ENCODE measurements at regions of chr19 and their contacts with region 1.

Region 1: GRCh38 chr19:18919086-18919899 is at the starts of genes COPE and DDX49:
- DNase-seq: peak; percentile 98
- H3K4me3 Mint-ChIP-seq: peak within 1 kb of the TSS; percentile 96
- H3K27ac Mint-ChIP-seq: peak within 1 kb of the TSS; percentile 94
- H3K4me1 Mint-ChIP-seq: peaks cover 19% of the 10 kb centered on the region
- H3K27me3 Mint-ChIP-seq: no peaks in the 10 kb centered on the region
- total RNA-seq, gene COPE: 231 and 240 TPM in 2 replicates
- total RNA-seq, gene DDX49: 75.2 and 77.5 TPM in 2 replicates

Region 2: DNA sequence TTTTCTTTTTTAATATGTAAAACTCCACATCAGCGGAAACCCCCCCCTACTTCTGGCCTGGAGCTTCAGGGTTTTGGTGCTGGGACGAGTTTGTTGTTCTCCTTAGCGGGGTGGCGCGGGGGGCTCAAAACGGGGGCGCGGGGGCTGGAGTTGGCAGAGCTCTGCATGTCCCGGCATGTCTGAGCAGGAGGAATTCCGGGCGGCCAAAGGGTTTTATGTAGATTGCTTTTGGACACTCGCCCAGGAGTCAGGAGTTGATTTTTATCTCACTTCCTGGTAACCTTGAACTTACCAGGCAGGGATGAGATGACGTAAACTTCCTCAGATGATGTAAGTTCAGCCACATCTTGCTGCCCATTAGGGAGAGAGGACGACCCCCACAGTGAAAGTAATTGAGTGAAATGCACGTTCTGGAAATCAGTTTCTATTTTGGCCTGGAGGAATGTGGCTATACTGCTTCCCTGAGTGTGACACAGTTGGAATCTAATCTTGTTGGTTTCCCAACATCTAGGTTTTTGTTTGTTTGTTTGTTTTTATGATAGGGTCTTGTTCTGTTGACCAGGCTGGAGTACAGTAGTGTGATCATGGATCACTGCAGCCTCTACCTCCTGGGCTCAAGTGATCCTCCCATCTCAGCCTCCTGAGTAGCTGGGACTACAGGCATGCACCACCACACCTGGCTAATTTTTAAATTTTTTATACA is 554.3 kb before region 1 on chr19:
- intact Hi-C with region 1: no loop called
- DNase-seq: no peak
- H3K4me3 Mint-ChIP-seq: no peak overlapping the region
- H3K27ac Mint-ChIP-seq: no peak overlapping the region
- H3K4me1 Mint-ChIP-seq: no peaks in the 10 kb centered on the region
- H3K27me3 Mint-ChIP-seq: no peaks in the 10 kb centered on the region

Region 3: GRCh38 chr19:18932216-18932841 is 13.0 kb after region 1 on chr19:
- intact Hi-C with region 1: loop called (anchors 1 kb)
- DNase-seq: peak; percentile 66
- H3K4me3 Mint-ChIP-seq: peak overlapping the region; percentile 74
- H3K27ac Mint-ChIP-seq: no peak overlapping the region
- H3K4me1 Mint-ChIP-seq: peaks cover 4% of the 10 kb centered on the region
- H3K27me3 Mint-ChIP-seq: peaks cover 12% of the 10 kb centered on the region

Region 4: DNA sequence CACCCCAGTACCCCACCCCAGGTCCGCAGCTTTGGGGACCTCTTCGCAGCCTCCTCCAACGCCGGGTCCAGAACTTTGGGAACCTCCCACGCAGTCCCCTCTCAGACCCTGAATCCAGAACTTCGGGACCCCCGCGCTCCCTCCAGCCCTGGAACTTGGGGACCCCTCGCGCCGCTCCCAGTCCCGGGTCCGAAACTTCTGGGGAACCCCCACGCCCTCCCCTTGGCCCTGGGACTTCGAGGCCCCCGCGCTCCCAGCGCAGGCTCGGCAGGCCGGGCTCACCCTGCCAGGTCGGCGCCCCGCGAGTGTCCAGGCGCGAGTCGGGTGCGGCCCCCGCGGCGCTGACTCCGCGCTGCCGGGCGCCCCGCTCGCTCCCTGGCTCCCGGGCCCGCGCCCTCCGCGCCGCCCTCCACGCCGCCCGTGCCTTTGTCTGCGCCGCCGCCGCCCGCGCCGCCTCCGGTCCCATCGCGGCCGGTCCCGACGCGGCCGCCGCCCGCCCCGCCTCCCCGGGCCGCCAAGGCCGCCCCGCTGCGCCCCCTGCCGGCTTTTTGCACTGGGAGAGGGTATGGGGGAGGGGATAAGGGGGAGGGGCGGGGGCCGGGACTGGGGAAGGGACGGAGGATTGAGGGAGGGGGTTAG is 21.6 kb after region 1 on chr19 and contains the start of gene HOMER3:
- intact Hi-C with region 1: loop called (anchors 2 kb)
- DNase-seq: peak; percentile 61
- H3K4me3 Mint-ChIP-seq: peak within 1 kb of the TSS; percentile 51
- H3K27ac Mint-ChIP-seq: no peak within 1 kb of the TSS
- H3K4me1 Mint-ChIP-seq: peaks cover 2% of the 10 kb centered on the region
- H3K27me3 Mint-ChIP-seq: peaks cover 31% of the 10 kb centered on the region
- total RNA-seq, gene HOMER3: 3.6 and 4.4 TPM in 2 replicates